Endothelial cell of umbilical vein (primary cell): ENCODE measurements at regions of chr4 and their contacts with region 1.

Region 1: DNA sequence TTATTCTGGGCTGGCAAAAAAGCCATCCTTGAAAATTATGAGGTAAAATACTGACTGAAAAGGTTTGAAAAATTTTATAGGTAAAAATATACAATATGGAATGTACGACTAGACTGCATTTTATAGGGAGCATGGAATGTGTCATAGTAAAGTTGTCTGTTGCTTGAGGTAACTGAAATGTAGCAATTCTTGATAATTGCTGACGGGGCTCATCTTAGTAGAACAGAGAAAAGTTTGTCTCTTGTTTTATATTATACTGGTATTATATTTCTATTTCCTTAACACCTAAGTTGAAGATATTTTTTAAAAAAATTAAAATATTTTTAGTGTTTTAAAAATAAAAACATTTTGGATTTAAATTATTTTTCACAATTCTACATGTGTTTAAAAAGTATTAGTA is 11.0 kb downstream of the GRIA2 start:
- DNase-seq: no peak
- H3K4me3 ChIP-seq: no peak overlapping the region
- H3K27ac ChIP-seq: no peak overlapping the region
- H3K4me1 ChIP-seq: no peaks in the 10 kb centered on the region
- H3K27me3 ChIP-seq: no peaks in the 10 kb centered on the region
- CTCF ChIP-seq: no peak
- POLR2A ChIP-seq: no peak

Region 2: DNA sequence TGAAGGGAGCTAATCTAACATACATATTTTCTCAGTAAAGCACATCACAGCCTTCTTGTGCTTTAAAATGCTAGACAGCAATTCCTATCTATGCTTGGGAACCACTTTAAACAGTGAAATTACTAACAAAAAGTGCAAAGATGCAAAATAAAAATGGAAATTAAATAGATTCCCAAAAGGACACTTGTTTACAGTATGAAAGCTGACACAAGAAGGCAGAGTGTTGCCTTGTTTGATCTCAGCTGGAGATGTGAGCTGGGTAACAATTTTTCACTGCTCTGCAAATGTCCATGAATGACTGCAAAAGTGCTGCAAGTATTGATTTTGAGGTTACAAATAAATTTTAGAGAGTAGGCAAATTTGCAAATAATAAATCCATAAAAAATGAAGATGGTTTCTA is 11.3 kb after region 1 on chr4:
- CTCF ChIA-PET with region 1: interaction called, 15 read pairs
- POLR2A ChIA-PET with region 1: no interaction called
- dilution Hi-C with region 1: no loop called
- intact Hi-C with region 1: no loop called
- DNase-seq: no peak
- H3K4me3 ChIP-seq: no peak overlapping the region
- H3K27ac ChIP-seq: no peak overlapping the region
- H3K4me1 ChIP-seq: no peaks in the 10 kb centered on the region
- H3K27me3 ChIP-seq: no peaks in the 10 kb centered on the region
- CTCF ChIP-seq: no peak
- POLR2A ChIP-seq: no peak